Cardiac septum (tissue), 1 donor: ENCODE measurements at regions of chr1 and their contacts with region 1.

Region 1: GRCh38 chr1:9196129-9197040 is 38.2 kb upstream of the H6PD start:
- DNase-seq: peak; percentile 87

Region 2: DNA sequence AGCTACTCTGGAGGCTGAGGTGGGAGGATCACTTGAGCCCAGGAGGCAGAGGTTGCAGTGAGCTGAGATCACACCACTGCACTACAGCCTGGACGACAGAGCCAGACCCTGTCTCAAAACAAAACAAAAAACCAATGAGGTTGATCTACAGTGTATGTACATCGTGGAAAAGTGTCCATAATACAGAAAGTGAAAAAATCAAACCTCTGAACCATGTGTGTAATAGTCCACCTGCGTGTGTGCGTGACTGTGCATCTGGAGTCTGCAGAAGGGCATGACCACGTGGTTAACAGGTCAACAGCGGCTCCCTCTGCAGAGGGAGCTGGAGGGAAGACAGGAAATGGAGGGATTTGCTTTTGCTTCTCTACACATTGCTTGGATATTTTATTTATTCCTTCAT is 285.5 kb before region 1 on chr1:
- intact Hi-C with region 1: loop called (anchors 10 kb)
- DNase-seq: no peak

Region 3: DNA sequence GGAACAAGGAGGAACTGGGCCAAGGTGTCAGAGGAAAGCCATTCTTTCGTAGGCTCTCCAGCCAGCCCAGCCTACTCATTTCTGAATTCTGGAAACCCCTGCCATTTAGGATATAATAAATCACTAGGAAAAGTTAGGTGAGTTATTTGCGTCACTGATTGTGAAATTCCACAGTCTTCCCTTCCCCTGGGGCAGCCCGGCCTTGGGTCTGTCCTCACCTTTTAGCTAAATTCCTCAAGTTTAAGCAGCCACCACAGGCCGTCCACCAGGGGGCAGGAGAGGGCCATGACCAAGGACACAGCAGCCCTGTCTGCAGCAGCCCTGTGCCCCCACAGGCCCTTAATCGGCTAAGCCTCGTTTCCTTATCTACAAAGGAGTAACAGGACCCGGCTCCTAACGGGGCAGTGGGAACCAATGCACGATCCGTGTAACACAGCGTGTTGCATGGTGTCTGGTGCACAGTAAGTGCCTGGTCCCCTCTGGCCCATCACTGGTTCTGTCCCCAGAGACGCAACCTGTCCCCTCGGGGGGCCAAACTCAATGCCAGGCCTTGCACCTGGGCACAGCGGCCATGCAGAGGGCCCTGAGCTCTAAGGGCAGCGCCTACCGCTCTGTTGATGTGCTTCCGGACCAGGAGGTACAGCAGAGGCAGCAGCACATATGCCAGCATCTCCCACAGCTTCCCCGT is 85.6 kb before region 1 on chr1:
- intact Hi-C with region 1: loop called (anchors 1 kb)
- DNase-seq: peak; percentile 93

Region 4: DNA sequence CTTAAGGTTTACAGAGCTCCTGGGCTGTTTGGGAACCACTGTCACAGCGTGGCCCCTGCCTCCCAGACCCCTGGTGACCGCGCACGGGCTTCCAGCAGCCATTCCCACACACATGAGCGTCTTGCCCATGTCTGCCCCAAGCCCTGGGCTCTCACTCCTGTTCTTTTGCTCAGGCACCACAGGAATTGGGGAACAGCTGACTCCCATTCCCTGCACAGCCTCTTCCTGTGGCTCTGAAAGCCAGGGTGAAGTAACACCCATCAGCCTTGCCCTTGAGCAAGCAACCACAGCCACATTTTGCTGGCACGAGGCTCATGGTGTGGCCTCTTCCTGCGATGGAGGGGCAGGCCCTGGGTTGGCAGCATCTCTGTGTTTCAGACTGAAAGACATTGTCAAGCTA is 53.1 kb before region 1 on chr1:
- intact Hi-C with region 1: loop called (anchors 2 kb)
- DNase-seq: no peak

Region 5: GRCh38 chr1:9150582-9151327 is 45.6 kb before region 1 on chr1:
- intact Hi-C with region 1: loop called (anchors 2 kb)
- DNase-seq: no peak

Region 6: GRCh38 chr1:9222846-9223625 is 26.7 kb after region 1 on chr1:
- intact Hi-C with region 1: no loop called
- DNase-seq: no peak

Region 7: GRCh38 chr1:9269078-9269501 is 72.7 kb after region 1 on chr1:
- intact Hi-C with region 1: no loop called
- DNase-seq: no peak